BJ (cell line): ENCODE measurements at regions of chr11 and their contacts with region 1.

Region 1: DNA sequence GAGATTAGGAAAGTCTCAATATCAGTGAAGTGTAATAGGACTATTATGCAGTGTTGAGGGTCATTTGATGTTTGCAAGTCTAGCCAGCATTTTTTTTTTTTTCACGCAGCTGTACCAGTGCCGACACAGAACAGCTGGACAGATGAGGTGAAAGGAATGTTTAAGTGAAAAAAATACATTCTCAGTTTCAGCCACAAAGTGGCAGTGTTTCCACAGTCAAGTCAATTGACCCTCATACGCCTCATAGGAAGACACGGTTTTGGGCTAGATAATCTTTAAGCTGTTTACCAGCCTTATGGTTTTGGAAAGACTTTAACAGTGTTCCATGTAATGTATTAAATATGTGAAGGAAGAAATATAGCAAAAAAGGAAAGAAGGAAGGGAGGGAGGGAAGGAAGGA is 349.9 kb upstream of the ANO3 start:
- DNase-seq: peak; percentile 16
- H3K4me3 ChIP-seq: no peak overlapping the region
- H3K27me3 ChIP-seq: no peaks in the 10 kb centered on the region
- CTCF ChIP-seq: peak; percentile 52

Region 2: DNA sequence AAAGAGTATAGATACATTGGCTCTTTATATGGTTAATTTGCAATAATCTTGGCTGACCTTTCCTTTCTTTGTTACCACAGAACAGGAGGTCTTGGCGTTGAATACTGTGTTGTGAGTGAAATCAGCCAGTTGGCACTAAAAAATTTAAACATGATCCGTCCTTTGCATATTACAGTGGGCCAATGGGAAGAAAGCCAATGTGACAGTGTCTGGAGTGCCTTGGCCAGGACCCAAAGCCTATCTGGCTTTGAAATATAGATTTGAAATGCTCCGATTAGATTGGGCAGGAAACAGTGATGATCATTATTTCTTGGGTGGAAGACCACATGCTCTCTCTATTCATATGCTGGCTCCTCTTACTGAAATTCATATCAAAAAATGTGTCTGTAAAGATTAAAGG is 10.3 kb after region 1 on chr11:
- CTCF ChIA-PET with region 1: interaction called, 14 read pairs
- POLR2A ChIA-PET with region 1: no interaction called
- DNase-seq: no peak
- H3K4me3 ChIP-seq: no peak overlapping the region
- H3K27me3 ChIP-seq: no peaks in the 10 kb centered on the region
- CTCF ChIP-seq: no peak

Region 3: DNA sequence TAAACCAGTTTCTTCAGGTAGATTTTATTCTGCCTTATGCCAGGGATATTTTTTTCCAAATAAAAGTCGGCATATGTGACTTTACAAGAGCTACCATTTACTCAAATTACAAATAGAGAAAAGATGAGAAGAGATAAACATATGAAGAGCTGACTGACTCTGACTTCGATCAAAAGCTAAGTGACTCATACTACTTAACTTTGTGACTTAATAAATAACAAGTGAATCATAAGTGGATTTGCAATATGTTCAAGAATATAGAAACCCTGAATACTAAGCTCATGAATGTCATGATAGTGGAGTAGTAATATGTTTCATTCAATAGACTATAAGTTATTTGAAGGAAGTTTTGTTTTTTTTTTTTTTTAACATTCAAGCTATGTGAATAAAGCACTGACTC is 219.4 kb after region 1 on chr11:
- CTCF ChIA-PET with region 1: interaction called, 12 read pairs
- POLR2A ChIA-PET with region 1: no interaction called
- DNase-seq: no peak
- H3K4me3 ChIP-seq: no peak overlapping the region
- H3K27me3 ChIP-seq: no peaks in the 10 kb centered on the region
- CTCF ChIP-seq: no peak

Region 4: DNA sequence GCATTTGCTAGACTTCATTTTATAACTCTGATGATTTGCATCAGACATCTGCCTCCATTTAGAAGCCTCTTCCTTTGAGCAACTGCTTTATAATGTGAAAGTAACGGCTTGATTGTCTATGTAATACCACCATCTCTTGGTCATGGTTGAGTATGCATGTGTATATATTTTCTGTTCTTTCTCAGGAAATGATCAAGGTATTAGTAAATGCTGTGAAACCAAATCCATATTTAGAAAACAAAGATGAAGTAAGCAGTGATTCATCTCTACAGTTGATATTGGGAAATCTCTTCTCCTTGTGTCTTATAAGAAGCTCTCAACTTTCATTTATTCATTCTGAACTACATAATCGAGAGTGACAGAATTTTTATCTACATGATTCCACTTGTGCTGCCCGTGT is 245.3 kb after region 1 on chr11:
- CTCF ChIA-PET with region 1: interaction called, 54 read pairs
- POLR2A ChIA-PET with region 1: no interaction called
- DNase-seq: peak; percentile 76
- H3K4me3 ChIP-seq: no peak overlapping the region
- H3K27me3 ChIP-seq: no peaks in the 10 kb centered on the region
- CTCF ChIP-seq: peak; percentile 53